Activated CD4-positive, alpha-beta T cell treated with anti-CD3 and anti-CD28 coated beads for 36 hours (primary cell): ENCODE measurements at regions of chr7 and their contacts with region 1.

Region 1: DNA sequence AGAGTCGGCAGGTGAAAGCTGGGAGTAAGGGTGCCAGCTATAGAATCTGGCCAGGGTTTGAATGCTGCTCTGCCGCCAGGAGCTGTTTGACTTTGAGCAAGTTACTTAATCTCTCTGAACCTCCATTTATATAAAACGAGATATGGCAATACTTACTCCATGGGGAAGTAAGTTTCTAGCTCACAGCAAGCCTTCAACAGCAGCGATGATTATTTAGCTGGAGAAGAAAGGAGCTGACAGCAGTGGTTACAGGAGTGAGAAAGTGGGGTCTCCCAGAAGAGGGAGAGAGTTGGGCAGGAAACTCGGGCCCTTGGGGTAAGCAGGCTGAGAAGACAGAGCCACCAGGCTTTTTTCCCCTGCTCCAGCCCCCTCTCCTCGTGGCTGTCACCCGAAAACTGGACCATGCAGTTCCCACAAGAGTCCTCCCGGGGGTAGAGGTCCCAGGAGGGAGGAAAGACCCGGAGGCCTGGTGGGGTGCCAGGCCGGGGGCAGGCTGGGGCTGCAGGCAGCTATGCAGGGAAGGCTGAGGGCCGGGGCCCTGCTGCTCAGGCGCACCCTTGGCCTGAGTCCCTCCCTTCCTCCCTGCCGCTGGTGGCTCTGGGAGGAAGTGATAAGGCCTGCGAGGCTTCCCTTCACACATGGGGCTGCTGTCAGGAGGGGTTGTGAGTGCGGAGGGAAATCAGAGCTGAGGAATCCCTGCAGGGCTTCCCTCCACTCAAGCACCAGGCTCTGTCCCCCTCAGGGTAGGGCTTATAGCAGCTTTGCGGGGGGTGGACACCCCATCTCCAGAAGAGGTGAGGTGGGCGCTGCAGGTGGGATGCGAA is 3.5 kb downstream of the NOS3 start:
- DNase-seq: peak; percentile 58
- ATAC-seq: peak; percentile 70
- H3K4me3 Mint-ChIP-seq: peak overlapping the region; percentile 49
- H3K27ac Mint-ChIP-seq: no peak overlapping the region
- H3K4me1 Mint-ChIP-seq: peaks cover 40% of the 10 kb centered on the region
- H3K27me3 Mint-ChIP-seq: no peaks in the 10 kb centered on the region

Region 2: DNA sequence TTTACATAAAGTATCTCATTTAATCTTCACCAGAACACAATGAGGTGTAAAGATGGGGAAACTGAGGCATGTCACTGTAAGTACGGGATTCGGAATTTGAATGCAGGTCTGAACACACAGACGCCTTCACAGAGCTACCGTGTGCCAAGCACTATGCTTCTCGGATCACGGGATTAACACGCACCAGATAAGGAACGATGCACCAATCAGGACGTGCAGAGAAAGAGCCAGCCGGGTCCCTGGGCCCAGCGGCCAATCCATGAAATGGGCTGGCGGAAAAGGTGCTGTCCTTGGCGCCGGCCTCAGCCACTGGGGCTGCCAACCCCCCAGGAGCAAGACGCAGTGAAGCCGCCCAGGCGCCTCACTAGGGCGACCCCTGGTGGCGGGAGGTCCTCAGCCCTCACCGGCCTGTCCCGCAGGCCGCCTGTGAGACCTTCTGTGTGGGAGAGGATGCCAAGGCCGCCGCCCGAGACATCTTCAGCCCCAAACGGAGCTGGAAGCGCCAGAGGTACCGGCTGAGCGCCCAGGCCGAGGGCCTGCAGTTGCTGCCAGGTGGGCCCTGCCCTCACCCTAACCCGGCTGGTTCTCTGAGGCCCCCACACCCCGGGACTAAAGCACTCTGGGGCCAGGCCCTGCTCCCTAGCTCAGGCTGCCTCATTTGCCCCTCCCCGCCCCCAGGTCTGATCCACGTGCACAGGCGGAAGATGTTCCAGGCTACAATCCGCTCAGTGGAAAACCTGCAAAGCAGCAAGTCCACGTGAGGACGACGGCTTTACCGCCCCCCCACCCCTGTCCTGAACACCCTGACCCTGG is 14.4 kb after region 1 on chr7:
- CTCF ChIA-PET with region 1: interaction called, 35 read pairs
- POLR2A ChIA-PET with region 1: interaction called, 4 read pairs
- intact Hi-C with region 1: no loop called
- DNase-seq: peak; percentile 89
- ATAC-seq: peak; percentile 67
- H3K4me3 Mint-ChIP-seq: peak overlapping the region; percentile 55
- H3K27ac Mint-ChIP-seq: peak overlapping the region; percentile 59
- H3K4me1 Mint-ChIP-seq: peaks cover 53% of the 10 kb centered on the region
- H3K27me3 Mint-ChIP-seq: no peaks in the 10 kb centered on the region